Activated T-helper 2 cell treated with anti-CD3 and anti-CD28 coated beads, Interferon-gamma antibody, Interleukin-2, Interleukin-4, amounts not matched to agents 10 μg/mL and 5 μg/mL and 100 μg/mL, durations not matched to agents 14 hours and 24 hours and 36 hours (primary cell): ENCODE measurements at regions of chr16 and their contacts with region 1.

Region 1: GRCh38 chr16:57519796-57520360 is 16.5 kb downstream of the CCDC102A start:
- DNase-seq: peak; percentile 62
- H3K4me3 Mint-ChIP-seq: no peak overlapping the region
- H3K27ac Mint-ChIP-seq: no peak overlapping the region
- H3K4me1 Mint-ChIP-seq: no peaks in the 10 kb centered on the region
- H3K27me3 Mint-ChIP-seq: no peaks in the 10 kb centered on the region

Region 2: DNA sequence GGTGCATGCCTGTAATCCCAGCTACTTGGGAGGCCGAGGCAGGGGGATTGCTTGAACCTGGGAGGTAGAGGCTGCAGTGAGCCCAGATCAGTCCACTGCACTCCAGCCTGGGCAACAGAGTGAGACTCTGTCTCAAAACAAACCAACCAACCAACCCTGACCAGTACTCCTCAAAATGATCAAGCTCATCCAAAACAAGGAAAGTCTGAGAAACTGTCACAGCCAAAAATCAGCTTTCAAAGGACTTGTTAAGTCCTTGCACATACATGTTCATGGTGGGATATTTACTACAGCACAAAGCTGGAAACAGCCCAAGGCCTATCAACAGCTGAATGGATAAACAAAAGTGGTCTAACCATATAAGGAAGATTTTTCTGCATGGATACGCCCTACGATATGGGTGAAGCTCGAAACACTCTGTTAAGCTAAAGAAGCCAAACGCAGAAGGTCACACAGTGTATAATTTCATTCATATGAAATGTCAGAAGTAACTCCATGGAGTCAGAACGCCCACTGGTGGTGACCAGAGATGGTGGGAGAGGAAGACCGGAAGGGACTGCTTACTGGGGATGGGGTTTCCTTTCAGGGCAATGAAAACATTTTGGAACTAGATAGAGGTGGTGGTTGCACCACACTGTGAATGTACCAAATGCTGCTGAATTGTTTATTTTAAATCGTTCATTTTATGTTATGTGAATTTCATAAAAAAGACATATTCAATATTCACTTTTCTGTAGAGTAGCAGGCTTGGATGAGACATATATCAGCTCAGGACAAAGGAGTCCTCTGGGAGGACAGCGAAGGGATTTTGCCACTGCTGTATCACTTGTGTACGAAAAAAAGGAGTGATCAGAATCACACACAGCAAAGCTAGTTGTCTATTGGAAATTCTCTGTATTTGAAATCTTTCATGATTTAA is 97.6 kb before region 1 on chr16:
- intact Hi-C with region 1: loop called (anchors 1 kb)
- DNase-seq: no peak
- H3K4me3 Mint-ChIP-seq: no peak overlapping the region
- H3K27ac Mint-ChIP-seq: no peak overlapping the region
- H3K4me1 Mint-ChIP-seq: peaks cover 14% of the 10 kb centered on the region
- H3K27me3 Mint-ChIP-seq: no peaks in the 10 kb centered on the region

Region 3: GRCh38 chr16:57462209-57462977 is 57.5 kb before region 1 on chr16 and contains the start of gene POLR2C:
- intact Hi-C with region 1: loop called (anchors 2 kb)
- DNase-seq: peak; percentile 89
- H3K4me3 Mint-ChIP-seq: peak within 1 kb of the TSS; percentile 100
- H3K27ac Mint-ChIP-seq: peak within 1 kb of the TSS; percentile 100
- H3K4me1 Mint-ChIP-seq: peaks cover 21% of the 10 kb centered on the region
- H3K27me3 Mint-ChIP-seq: no peaks in the 10 kb centered on the region
- total RNA-seq, gene POLR2C: 73.6 and 75.6 TPM in 2 replicates

Region 4: GRCh38 chr16:57475711-57476339 is 44.1 kb before region 1 on chr16:
- intact Hi-C with region 1: loop called (anchors 1 kb)
- DNase-seq: peak; percentile 78
- H3K4me3 Mint-ChIP-seq: peak overlapping the region; percentile 47
- H3K27ac Mint-ChIP-seq: peak overlapping the region; percentile 52
- H3K4me1 Mint-ChIP-seq: peaks cover 12% of the 10 kb centered on the region
- H3K27me3 Mint-ChIP-seq: peaks cover 3% of the 10 kb centered on the region

Region 5: DNA sequence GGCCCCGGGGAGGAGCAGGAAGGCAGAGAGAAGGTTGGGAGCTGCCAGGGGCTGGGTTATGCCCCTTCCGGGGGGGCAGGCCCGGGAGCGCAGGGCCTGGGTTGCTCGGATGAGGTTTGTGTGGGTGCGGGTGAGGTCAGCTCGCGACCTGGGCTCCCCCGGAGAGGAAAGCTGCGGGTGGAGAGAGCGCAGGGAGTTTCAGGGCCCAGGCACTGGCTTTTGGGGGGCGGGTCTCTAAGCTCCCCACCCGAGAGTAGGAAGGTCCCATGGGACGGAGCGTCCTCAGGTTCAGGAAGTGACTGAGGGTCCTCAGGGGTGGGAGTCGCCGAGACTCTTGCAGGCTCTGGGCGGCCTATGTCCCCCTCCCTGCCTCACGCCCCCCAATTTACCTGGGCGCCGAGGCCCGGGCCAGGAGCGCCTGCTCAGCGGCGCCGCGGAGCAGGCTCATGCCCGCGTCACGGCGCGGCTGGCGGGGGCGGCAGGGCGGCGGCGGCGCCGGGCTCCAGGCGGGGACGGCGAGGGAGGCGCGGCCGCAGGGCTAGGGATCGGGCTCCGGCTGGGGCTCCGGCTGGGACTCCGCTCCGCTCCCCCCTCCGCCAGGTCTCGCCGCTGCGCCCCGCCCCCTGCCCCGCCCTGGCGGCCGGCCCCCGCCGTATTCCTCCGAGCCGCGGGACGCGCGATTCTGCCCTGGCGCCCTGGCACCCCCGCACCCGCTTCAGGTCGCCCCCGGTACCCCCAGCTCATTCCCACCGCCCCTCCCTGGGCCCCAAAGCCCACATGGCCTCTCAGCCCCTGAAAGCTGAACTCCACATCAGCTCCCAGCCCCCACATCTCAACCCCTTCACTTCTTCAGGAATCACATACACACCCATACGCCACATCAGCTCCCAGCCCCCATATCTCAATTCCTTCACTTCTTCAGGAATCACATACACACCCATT is 33.7 kb before region 1 on chr16 and contains the start of gene DOK4:
- intact Hi-C with region 1: no loop called
- DNase-seq: peak; percentile 66
- H3K4me3 Mint-ChIP-seq: peak within 1 kb of the TSS; percentile 77
- H3K27ac Mint-ChIP-seq: no peak within 1 kb of the TSS
- H3K4me1 Mint-ChIP-seq: peaks cover 8% of the 10 kb centered on the region
- H3K27me3 Mint-ChIP-seq: peaks cover 10% of the 10 kb centered on the region
- total RNA-seq, gene DOK4: 5.7 and 6.6 TPM in 2 replicates

Region 6: GRCh38 chr16:57503366-57503765 is 16.5 kb before region 1 on chr16:
- intact Hi-C with region 1: no loop called
- DNase-seq: no peak
- H3K4me3 Mint-ChIP-seq: no peak overlapping the region
- H3K27ac Mint-ChIP-seq: no peak overlapping the region
- H3K4me1 Mint-ChIP-seq: peaks cover 11% of the 10 kb centered on the region
- H3K27me3 Mint-ChIP-seq: no peaks in the 10 kb centered on the region